ENCODE measurements at regions of chr7 and their contacts with region 1.

Region 1: GRCh38 chr7:100852048-100852872 is at the start of gene SLC12A9:
- DNase-seq: peak; percentile 88 to 91
- H3K4me3 ChIP-seq: peak within 1 kb of the TSS; percentile 62 to 66
- H3K27ac ChIP-seq: peak within 1 kb of the TSS; percentile 43 to 78
- H3K4me1 ChIP-seq: no peaks in the 10 kb centered on the region
- H3K27me3 ChIP-seq: no peaks in the 10 kb centered on the region
- CTCF ChIP-seq: peak; percentile 90 to 97 (median 96)
- POLR2A ChIP-seq: peak; percentile 29 to 38
- total RNA-seq, gene SLC12A9: 9.0 to 36.9 (median 25.9) TPM

Region 2: GRCh38 chr7:100516135-100516812 is 336.0 kb before region 1 on chr7:
- intact Hi-C with region 1: no loop called
- DNase-seq: peak; percentile 45 to 55
- H3K4me3 ChIP-seq: no peak overlapping the region
- H3K27ac ChIP-seq: no peak overlapping the region
- H3K4me1 ChIP-seq: no peaks in the 10 kb centered on the region
- H3K27me3 ChIP-seq: no peaks in the 10 kb centered on the region
- CTCF ChIP-seq: no peak
- POLR2A ChIP-seq: no peak

Region 3: GRCh38 chr7:100719523-100720319 is 132.5 kb before region 1 on chr7:
- intact Hi-C with region 1: loop called (anchors 5 kb)
- DNase-seq: peak in 1 of 2 donors; percentile 51
- H3K4me3 ChIP-seq: peak overlapping the region in 1 of 2 donors; percentile 19
- H3K27ac ChIP-seq: no peak overlapping the region
- H3K4me1 ChIP-seq: peaks cover 0 to 6% of the 10 kb centered on the region in 2 donors
- H3K27me3 ChIP-seq: peaks cover 0 to 4% of the 10 kb centered on the region in 2 donors
- CTCF ChIP-seq: peak; percentile 24 to 58 (median 48)
- POLR2A ChIP-seq: no peak

Measured in uterus (tissue), 4 donors.